H1 (cell line): ENCODE measurements at regions of chr6 and their contacts with region 1.

Region 1: DNA sequence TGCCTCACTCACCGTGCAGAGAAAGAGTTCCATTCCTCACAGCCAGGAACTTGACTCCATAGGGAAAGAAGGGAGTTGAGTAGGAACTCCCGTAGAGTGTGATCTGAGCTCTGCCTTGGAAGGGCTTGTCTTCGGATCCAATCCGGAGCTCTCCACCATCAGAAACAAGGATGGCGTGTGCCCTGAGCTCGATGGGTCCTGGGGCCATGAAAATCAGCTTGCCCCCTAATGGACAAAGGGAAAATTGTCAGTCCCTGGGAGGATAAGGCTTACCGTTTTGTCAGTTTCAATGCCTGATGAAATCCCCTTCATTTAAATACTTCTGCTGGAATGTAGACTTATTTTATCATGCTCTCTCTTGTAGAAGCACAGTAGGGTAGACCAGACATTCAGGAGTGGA is 153.3 kb downstream of the PKHD1 start:
- DNase-seq: peak; percentile 41 to 54
- H3K4me3 ChIP-seq: no peak overlapping the region
- H3K27ac ChIP-seq: no peak overlapping the region
- H3K4me1 ChIP-seq: no peaks in the 10 kb centered on the region; a peak in 1 of 7 replicates
- H3K27me3 ChIP-seq: no peaks in the 10 kb centered on the region
- CTCF ChIP-seq: peak; percentile 56 to 80 (median 61)
- EP300 ChIP-seq: no peak
- POLR2A ChIP-seq: no peak
- RAD21 ChIP-seq: peak; percentile 34 to 51; a peak in 3 of 4 replicates

Region 2: GRCh38 chr6:51805517-51805916 is 128.6 kb before region 1 on chr6:
- CTCF ChIA-PET with region 1: no interaction called
- POLR2A ChIA-PET with region 1: no interaction called
- DNase-seq: no peak
- H3K4me3 ChIP-seq: no peak overlapping the region
- H3K27ac ChIP-seq: no peak overlapping the region
- H3K4me1 ChIP-seq: no peaks in the 10 kb centered on the region
- H3K27me3 ChIP-seq: no peaks in the 10 kb centered on the region
- CTCF ChIP-seq: no peak
- EP300 ChIP-seq: no peak
- POLR2A ChIP-seq: no peak
- RAD21 ChIP-seq: no peak

Region 3: GRCh38 chr6:51855310-51856082 is 78.6 kb before region 1 on chr6:
- CTCF ChIA-PET with region 1: interaction called, 11 read pairs
- POLR2A ChIA-PET with region 1: no interaction called
- DNase-seq: peak in 1 of 2 experiments; percentile 44
- H3K4me3 ChIP-seq: no peak overlapping the region
- H3K27ac ChIP-seq: no peak overlapping the region
- H3K4me1 ChIP-seq: peaks cover 2 to 4% (median 3%) of the 10 kb centered on the region in 4 experiments; a peak in 2 of 7 replicates
- H3K27me3 ChIP-seq: no peaks in the 10 kb centered on the region
- CTCF ChIP-seq: peak in 2 of 3 experiments; percentile 66 to 77; a peak in 3 of 4 replicates
- EP300 ChIP-seq: no peak
- POLR2A ChIP-seq: no peak
- RAD21 ChIP-seq: peak; percentile 78 to 81

Region 4: DNA sequence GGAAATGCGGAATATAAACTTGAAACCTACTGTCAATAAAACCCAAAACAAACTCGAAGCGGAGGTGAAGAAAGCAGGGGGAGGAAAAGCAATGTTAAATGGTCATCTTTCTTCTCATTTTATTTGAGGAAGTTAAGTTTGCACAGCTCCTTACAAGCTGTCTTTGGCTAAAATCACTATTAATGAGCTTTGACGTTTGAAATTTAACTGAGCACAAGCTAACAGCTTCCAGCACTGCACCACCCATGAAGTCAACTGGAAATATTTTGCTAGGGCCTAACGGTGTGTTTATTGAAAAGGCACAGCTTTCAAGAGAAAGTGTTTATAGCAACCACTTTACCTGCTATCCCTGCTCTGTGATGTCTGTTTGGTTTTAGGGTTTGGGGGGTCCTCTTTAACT is 49.5 kb after region 1 on chr6:
- CTCF ChIA-PET with region 1: no interaction called
- POLR2A ChIA-PET with region 1: no interaction called
- DNase-seq: no peak
- H3K4me3 ChIP-seq: no peak overlapping the region
- H3K27ac ChIP-seq: no peak overlapping the region
- H3K4me1 ChIP-seq: peaks cover 0 to 11% (median under 1%) of the 10 kb centered on the region in 4 experiments; a peak in 3 of 7 replicates
- H3K27me3 ChIP-seq: no peaks in the 10 kb centered on the region
- CTCF ChIP-seq: no peak
- EP300 ChIP-seq: no peak
- POLR2A ChIP-seq: no peak
- RAD21 ChIP-seq: no peak

Region 5: DNA sequence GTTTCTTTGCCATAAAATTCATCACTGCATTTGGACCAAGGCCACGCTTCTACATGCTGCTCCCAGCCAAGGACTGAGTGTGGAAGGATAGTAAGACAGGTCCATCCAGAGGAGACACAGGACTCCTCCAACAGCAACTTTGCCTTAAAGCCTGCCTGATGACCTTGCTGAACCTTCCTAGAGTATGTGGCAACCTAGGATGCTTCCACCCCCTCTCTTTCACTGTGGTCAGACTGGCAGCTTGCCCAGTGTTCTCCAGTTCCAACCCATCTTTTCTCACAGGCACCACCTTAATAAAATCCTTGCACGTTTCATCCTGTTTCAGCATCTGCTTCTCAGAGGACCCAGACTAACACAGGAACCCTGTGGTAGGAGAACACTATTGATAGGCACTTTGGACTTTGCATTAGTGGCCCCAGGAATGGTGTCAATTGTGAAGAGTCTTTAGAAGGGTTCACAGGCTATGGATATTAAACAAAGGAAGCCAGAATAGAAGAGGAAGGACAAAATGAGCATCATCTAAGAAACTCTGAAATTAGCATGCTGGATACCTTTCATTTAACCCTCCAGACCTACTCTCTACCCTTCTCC is 155.8 kb after region 1 on chr6:
- CTCF ChIA-PET with region 1: no interaction called
- POLR2A ChIA-PET with region 1: no interaction called
- DNase-seq: no peak
- H3K4me3 ChIP-seq: no peak overlapping the region
- H3K27ac ChIP-seq: no peak overlapping the region
- H3K4me1 ChIP-seq: no peaks in the 10 kb centered on the region
- H3K27me3 ChIP-seq: no peaks in the 10 kb centered on the region
- CTCF ChIP-seq: no peak
- EP300 ChIP-seq: no peak
- POLR2A ChIP-seq: no peak
- RAD21 ChIP-seq: no peak